PC-3 (cell line): ENCODE measurements at regions of chr3 and their contacts with region 1.

Region 1: DNA sequence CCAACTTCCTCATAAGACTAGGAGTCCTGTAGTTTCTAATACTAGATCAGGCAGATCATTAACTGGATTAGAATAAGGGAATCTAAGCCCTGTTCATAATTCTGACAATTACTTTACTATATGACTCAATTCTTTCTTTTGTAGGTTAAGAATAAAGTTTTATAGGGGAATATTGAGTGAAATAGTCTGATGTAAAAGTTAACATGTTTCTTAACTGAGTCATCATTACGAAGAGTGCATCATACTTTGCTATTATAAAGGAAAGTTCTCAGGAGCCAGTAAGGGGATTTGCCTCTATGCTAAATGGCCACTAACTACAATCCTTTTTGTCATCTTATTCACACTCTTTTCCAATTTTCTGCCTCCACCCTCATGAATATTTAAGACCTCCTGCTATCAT is 63.1 kb downstream of the POLQ start:
- DNase-seq: peak; percentile 82
- ATAC-seq: peak; percentile 91
- H3K4me3 ChIP-seq: no peak overlapping the region
- H3K27ac ChIP-seq: peak overlapping the region; percentile 61
- H3K4me1 ChIP-seq: peaks cover 12% of the 10 kb centered on the region
- H3K27me3 ChIP-seq: no peaks in the 10 kb centered on the region
- CTCF ChIP-seq: no peak

Region 2: GRCh38 chr3:121462565-121462964 is 20.1 kb before region 1 on chr3:
- CTCF ChIA-PET with region 1: no interaction called
- POLR2A ChIA-PET with region 1: no interaction called
- intact Hi-C with region 1: loop called (anchors 2 kb)
- DNase-seq: no peak
- ATAC-seq: no peak
- H3K4me3 ChIP-seq: no peak overlapping the region
- H3K27ac ChIP-seq: no peak overlapping the region
- H3K4me1 ChIP-seq: peaks cover 5% of the 10 kb centered on the region; the same call in 1 of the 2 replicates
- H3K27me3 ChIP-seq: no peaks in the 10 kb centered on the region
- CTCF ChIP-seq: no peak